ENCODE measurements at regions of chr11 and their contacts with region 1.

Region 1: DNA sequence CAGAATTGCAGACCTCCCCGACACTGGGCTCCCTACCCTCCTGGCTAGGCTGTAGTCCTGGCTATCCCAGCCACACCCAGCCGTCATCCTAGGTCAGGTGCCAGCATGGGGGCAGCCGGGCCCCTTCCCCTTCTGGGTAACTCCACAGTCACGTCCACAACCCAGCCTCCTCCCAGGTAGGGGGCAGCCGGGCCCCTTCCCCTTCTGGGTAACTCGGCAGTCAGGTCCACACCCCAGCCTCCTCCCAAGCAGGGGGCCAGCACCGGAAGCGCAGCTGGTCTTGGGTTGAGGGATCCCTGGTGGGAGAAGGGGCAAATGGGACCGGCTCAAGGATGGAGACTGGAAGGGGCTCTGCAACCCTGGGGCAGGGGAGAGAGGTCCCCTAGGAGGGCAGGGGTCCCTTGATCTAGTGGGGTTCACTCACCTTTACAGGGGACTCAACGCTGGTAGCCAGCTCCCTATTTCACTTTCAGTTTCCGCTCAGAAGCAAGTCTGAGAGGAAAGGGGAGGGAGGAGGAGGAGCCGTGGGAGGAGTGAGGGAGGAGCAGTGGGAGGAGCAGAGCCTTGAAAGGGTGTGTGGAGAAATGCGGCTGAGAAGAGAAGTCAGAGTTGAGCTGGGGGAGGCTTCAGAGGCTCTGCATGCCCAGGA is at the start of gene TRIM21:
- DNase-seq: peak; percentile 90 to 92
- ATAC-seq: peak; percentile 99
- H3K4me3 ChIP-seq: peak within 1 kb of the TSS; percentile 75 to 95
- H3K27ac ChIP-seq: peak within 1 kb of the TSS in 1 of 2 donors; percentile 29
- H3K4me1 ChIP-seq: no peaks in the 10 kb centered on the region
- H3K27me3 ChIP-seq: no peaks in the 10 kb centered on the region
- total RNA-seq, gene TRIM21: 15.8 to 20.7 TPM

Region 2: GRCh38 chr11:4049006-4049405 is 344.3 kb before region 1 on chr11:
- intact Hi-C with region 1: no loop called
- DNase-seq: no peak
- ATAC-seq: no peak
- H3K4me3 ChIP-seq: no peak overlapping the region
- H3K27ac ChIP-seq: no peak overlapping the region
- H3K4me1 ChIP-seq: peaks cover 1% of the 10 kb centered on the region in 2 donors
- H3K27me3 ChIP-seq: no peaks in the 10 kb centered on the region

Region 3: GRCh38 chr11:4125141-4125540 is 268.2 kb before region 1 on chr11:
- intact Hi-C with region 1: no loop called
- DNase-seq: no peak
- ATAC-seq: no peak
- H3K4me3 ChIP-seq: no peak overlapping the region
- H3K27ac ChIP-seq: no peak overlapping the region
- H3K4me1 ChIP-seq: no peaks in the 10 kb centered on the region
- H3K27me3 ChIP-seq: no peaks in the 10 kb centered on the region

Region 4: DNA sequence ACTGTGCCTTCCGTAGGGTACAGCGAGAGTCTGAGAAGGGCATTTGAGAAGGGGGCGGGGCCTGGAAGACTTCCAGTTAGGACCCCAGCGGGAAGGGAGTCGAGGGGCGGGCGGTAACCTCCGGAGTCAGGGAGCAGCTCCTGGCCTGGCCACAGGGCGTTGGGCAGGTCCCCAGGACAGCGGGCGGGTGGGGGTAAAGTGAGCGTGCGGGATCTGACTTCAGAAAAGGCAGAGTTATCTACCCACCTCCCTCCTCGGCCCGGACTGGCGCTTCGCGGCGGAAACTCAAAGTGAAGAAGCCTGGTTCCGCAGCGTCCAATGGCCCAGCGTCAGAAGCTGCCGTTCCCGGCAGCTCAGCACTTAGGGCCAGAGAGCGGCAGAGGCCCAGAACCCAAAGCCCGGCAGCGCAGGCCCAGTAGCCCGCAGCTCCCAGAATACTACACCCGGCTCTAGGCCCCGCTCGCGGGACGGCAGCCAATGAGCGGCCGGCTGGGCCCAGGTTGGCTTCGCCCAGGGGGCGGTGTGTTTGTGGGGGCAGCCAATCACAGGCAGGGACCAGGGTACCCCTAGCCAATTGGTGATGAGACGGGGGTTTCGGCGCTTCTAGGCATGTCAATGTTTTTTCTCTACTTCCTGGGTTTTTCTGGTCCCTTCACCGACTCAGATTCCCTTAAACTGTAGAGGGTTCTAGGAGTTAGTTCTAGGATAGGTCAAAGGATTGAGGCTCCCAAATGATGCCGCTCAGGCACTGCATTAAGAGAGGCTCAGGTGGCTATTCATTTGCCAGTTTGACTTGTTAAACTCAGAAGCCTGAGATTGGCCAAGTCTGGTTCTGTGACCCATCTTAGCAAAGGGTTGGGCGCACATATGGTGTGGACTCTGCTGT is 214.7 kb after region 1 on chr11 and contains the start of gene TRIM68:
- intact Hi-C with region 1: loop called in 1 of 2 experiments (anchors 10 kb)
- DNase-seq: peak; percentile 98 to 99
- ATAC-seq: peak; percentile 100
- H3K4me3 ChIP-seq: peak within 1 kb of the TSS; percentile 82 to 86
- H3K27ac ChIP-seq: peak within 1 kb of the TSS; percentile 8 to 85
- H3K4me1 ChIP-seq: peaks cover 0 to 2% of the 10 kb centered on the region in 2 donors
- H3K27me3 ChIP-seq: no peaks in the 10 kb centered on the region
- total RNA-seq, gene TRIM68: 7.9 to 14.5 TPM

Measured in aorta (tissue), 5 donors.